ENCODE measurements at regions of chr1 and their contacts with region 1.

Region 1: GRCh38 chr1:50704126-50704525 is 255.9 kb downstream of the FAF1 start:
- DNase-seq: no peak
- H3K4me3 ChIP-seq: no peak overlapping the region
- H3K27me3 ChIP-seq: no peaks in the 10 kb centered on the region
- CTCF ChIP-seq: peak; percentile 82

Region 2: DNA sequence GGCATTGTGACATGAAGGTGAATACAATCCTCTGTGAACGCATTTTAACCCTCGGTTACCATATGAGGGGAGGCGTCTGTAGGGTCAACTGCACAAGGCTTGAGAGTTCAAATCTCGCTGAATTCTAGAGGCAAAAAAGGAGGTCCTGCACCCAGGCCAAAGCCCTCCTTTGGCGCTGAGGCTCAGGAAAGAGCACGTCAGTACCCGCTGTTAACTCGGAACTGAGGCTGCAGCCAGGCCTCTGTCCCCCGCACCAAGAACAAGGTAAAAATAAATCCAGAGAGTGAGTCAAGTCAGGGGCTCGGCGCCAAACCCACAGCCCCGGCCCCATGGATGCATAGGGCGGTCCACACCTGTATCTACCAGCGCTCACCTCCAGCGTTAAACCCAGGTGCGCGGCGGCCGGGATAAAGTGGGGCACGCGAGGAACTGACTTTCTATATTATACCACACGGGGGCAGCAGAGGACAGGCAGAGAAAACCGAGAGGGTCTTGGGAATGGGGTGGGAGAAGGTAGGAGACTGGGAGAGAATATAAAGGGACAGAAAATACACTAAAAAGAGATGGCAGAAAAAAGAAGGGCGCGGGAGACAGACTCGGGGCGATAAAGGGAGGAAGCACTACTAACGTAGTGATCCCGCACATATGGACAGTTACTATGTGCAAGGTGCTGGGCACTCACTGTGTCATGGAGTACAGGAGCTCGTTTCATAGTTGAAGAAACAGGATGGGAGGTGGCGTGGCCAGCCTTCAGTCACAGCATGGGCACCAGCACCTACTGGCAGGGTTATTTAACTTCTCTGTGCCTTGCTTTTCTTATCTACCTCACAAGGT is 335.7 kb before region 1 on chr1:
- CTCF ChIA-PET with region 1: interaction called, 29 read pairs
- POLR2A ChIA-PET with region 1: no interaction called
- DNase-seq: no peak
- H3K4me3 ChIP-seq: no peak overlapping the region
- H3K27me3 ChIP-seq: peaks cover 6% of the 10 kb centered on the region
- CTCF ChIP-seq: peak; percentile 74

Region 3: GRCh38 chr1:50720457-50721053 is 16.4 kb after region 1 on chr1:
- CTCF ChIA-PET with region 1: interaction called, 12 read pairs
- POLR2A ChIA-PET with region 1: no interaction called
- DNase-seq: no peak
- H3K4me3 ChIP-seq: no peak overlapping the region
- H3K27me3 ChIP-seq: no peaks in the 10 kb centered on the region
- CTCF ChIP-seq: no peak